Ascending aorta (tissue), 2 donors: ENCODE measurements at regions of chr18 and their contacts with region 1.

Region 1: GRCh38 chr18:21179590-21180220 is 62.3 kb upstream of the GREB1L start:
- DNase-seq: peak in 1 of 2 donors; percentile 73
- H3K4me3 ChIP-seq: no peak overlapping the region
- H3K27ac ChIP-seq: no peak overlapping the region
- H3K4me1 ChIP-seq: peaks cover 0 to 3% of the 10 kb centered on the region in 2 donors
- H3K27me3 ChIP-seq: no peaks in the 10 kb centered on the region
- CTCF ChIP-seq: peak; percentile 54 to 73 (median 62)

Region 2: DNA sequence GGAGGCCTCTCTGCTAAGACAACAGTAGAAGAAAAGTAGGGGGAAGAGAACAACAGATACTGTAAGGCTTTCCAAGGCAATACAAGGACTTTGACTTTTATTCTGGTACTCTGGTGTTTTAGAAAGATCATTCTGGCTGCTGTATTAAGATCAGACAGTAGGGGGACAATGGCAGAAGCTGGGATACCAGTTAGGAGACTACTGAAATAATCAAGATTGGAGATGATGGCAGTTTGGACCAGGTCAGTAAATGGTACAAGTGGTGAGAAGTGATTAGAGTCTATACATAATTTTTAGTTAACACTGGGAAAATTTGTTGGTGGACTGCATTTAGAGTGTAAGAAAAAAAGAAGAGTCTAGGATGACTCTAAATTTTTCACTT is 207.8 kb before region 1 on chr18:
- intact Hi-C with region 1: loop called (anchors 2 kb)
- DNase-seq: no peak
- H3K4me3 ChIP-seq: no peak overlapping the region
- H3K27ac ChIP-seq: no peak overlapping the region
- H3K4me1 ChIP-seq: no peaks in the 10 kb centered on the region
- H3K27me3 ChIP-seq: no peaks in the 10 kb centered on the region
- CTCF ChIP-seq: peak; percentile 20 to 33 (median 21)

Region 3: GRCh38 chr18:21053127-21053526 is 126.6 kb before region 1 on chr18:
- intact Hi-C with region 1: loop called (anchors 10 kb)
- DNase-seq: no peak
- H3K4me3 ChIP-seq: no peak overlapping the region
- H3K27ac ChIP-seq: peak overlapping the region; percentile 69 to 74
- H3K4me1 ChIP-seq: peaks cover 13 to 45% of the 10 kb centered on the region in 2 donors
- H3K27me3 ChIP-seq: no peaks in the 10 kb centered on the region
- CTCF ChIP-seq: no peak

Region 4: GRCh38 chr18:21383031-21383430 is 203.3 kb after region 1 on chr18:
- intact Hi-C with region 1: no loop called
- DNase-seq: no peak
- H3K4me3 ChIP-seq: no peak overlapping the region
- H3K27ac ChIP-seq: no peak overlapping the region
- H3K4me1 ChIP-seq: no peaks in the 10 kb centered on the region
- H3K27me3 ChIP-seq: no peaks in the 10 kb centered on the region
- CTCF ChIP-seq: no peak